ENCODE measurements at regions of chr13 and their contacts with region 1.

Region 1: GRCh38 chr13:52968074-52968700 is 60.4 kb upstream of the OLFM4 start:
- DNase-seq: peak; percentile 76
- CTCF ChIP-seq: peak; percentile 87

Region 2: DNA sequence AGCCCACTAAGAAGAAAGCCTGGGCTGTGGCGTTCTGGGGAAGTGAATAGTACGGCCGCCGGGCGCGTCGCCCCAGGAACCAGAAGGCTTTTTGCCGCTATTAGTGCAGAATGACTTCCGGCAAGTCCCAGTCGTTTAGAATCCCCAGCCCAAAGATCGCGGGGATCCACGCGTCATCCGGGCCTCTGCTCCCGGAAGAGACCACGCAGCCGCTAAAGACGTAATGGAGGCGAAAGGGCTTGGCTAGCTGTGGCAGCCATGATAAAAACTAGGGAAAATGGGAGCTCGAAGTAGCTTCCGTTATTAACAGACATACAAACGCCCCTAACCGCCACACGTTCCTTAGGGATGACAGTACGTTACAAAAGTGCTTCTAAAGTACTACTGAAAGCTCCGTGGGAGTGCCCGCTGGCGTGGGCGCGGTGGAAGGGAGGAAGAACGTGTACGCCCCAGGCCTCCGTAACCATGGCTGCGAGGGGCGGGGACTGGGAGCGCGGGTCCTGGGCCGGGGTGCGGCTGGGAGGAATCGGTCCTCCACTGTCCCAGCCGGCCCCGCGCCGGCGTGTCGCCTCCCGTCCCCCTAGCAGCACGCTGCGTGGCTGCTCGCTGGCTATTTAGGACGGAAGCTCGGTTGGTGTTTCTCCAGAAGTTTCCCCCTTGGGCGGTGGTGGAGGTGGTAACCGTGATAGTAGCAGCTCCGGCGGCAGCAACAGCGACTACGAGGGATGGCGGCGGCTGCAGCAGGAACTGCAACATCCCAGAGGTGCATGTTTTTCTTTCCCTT is 315.8 kb before region 1 on chr13 and contains the start of gene SUGT1:
- CTCF ChIA-PET with region 1: interaction called, 10 read pairs
- POLR2A ChIA-PET with region 1: no interaction called
- DNase-seq: peak; percentile 91
- CTCF ChIP-seq: peak; percentile 47

Region 3: GRCh38 chr13:52809310-52809769 is 158.8 kb before region 1 on chr13:
- CTCF ChIA-PET with region 1: interaction called, 15 read pairs
- POLR2A ChIA-PET with region 1: no interaction called
- DNase-seq: peak; percentile 79
- CTCF ChIP-seq: peak; percentile 62

Region 4: GRCh38 chr13:52879950-52880741 is 88.0 kb before region 1 on chr13:
- CTCF ChIA-PET with region 1: interaction called, 11 read pairs
- POLR2A ChIA-PET with region 1: no interaction called
- DNase-seq: no peak
- CTCF ChIP-seq: no peak

Region 5: DNA sequence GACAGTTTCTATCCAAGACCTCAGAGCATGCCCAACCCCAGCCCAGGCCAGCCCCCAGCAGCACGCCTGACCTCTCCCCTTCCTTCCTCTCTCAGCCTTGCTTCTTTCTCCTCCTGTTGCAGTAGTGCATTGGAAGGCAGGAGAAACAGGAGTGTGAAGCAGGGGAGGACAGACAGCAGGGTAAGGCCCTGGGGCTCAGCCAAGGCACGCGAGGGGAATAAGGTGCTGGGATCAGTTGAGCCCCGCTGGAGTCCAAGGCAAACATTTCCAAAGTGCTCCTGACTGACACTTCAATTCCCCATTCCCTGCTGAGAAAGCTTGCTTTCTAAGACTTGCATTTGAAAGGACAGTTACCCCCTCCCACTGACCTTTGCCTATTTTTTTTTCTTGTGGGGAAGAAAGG is 12.7 kb before region 1 on chr13:
- CTCF ChIA-PET with region 1: interaction called, 32 read pairs
- POLR2A ChIA-PET with region 1: no interaction called
- DNase-seq: no peak
- CTCF ChIP-seq: no peak